ENCODE measurements at regions of chr5 and their contacts with region 1.

Region 1: GRCh38 chr5:146965761-146966659 is 87.5 kb upstream of the PPP2R2B start:
- DNase-seq: peak; percentile 72 to 83 (median 74)
- ATAC-seq: peak; percentile 95
- H3K4me3 ChIP-seq: no peak overlapping the region
- H3K27ac ChIP-seq: no peak overlapping the region
- H3K4me1 ChIP-seq: no peaks in the 10 kb centered on the region
- H3K27me3 ChIP-seq: no peaks in the 10 kb centered on the region
- CTCF ChIP-seq: peak; percentile 76 to 99 (median 97)
- POLR2A ChIP-seq: no peak

Region 2: DNA sequence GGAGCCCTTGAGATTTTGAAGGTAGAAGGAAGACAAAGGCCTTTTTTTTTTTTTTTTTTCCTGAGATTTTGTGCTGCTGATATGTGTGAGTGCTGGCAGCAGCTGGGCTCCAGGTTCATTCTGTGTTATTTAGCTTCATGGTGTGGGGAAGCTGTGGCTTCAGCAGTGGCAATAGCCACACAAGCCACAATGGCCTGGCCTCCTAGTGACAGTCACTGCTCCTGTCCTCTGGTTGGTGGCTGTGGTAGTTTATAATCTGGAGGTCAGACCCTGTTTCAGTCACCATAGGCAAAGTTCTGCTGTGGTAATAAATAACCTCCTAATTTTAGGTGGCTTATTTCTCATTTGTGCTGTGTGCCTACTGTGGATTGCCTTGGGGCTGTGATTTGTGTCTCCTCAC is 421.8 kb before region 1 on chr5:
- intact Hi-C with region 1: loop called (anchors 2 kb)
- DNase-seq: no peak
- ATAC-seq: no peak
- H3K4me3 ChIP-seq: no peak overlapping the region
- H3K27ac ChIP-seq: no peak overlapping the region
- H3K4me1 ChIP-seq: no peaks in the 10 kb centered on the region
- H3K27me3 ChIP-seq: no peaks in the 10 kb centered on the region
- CTCF ChIP-seq: no peak
- POLR2A ChIP-seq: no peak

Region 3: DNA sequence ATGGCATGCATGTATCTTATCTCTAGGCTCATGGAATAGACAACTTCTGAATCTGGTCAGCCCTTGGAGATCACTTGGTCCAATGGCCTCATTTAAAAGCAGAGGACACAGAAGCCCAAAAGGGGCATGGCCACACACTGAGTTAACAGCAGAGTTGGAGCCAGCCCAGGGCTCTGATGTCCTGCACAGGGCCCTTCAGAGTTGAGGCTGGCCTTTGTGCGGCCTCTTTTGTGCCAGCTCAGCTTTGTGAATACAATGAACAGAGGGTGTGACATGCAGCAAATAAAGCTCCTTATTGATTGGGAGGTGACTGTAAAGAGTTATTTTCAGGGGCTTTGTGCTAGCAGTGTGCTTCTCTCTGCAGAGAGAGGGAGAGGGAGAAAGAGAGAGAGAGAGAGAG is 118.7 kb after region 1 on chr5:
- intact Hi-C with region 1: no loop called
- DNase-seq: no peak
- ATAC-seq: no peak
- H3K4me3 ChIP-seq: no peak overlapping the region
- H3K27ac ChIP-seq: no peak overlapping the region
- H3K4me1 ChIP-seq: no peaks in the 10 kb centered on the region
- H3K27me3 ChIP-seq: no peaks in the 10 kb centered on the region
- CTCF ChIP-seq: no peak
- POLR2A ChIP-seq: no peak

Measured in body of pancreas (tissue), 4 donors.